Activated CD4-positive, alpha-beta T cell treated with anti-CD3 and anti-CD28 coated beads for 36 hours (primary cell): ENCODE measurements at regions of chr6 and their contacts with region 1.

Region 1: GRCh38 chr6:158270389-158271127 is 41.7 kb upstream of the TULP4 start:
- DNase-seq: peak; percentile 45
- ATAC-seq: no peak
- H3K4me3 Mint-ChIP-seq: peak overlapping the region; percentile 15
- H3K27ac Mint-ChIP-seq: no peak overlapping the region
- H3K4me1 Mint-ChIP-seq: peaks cover 29% of the 10 kb centered on the region
- H3K27me3 Mint-ChIP-seq: no peaks in the 10 kb centered on the region

Region 2: DNA sequence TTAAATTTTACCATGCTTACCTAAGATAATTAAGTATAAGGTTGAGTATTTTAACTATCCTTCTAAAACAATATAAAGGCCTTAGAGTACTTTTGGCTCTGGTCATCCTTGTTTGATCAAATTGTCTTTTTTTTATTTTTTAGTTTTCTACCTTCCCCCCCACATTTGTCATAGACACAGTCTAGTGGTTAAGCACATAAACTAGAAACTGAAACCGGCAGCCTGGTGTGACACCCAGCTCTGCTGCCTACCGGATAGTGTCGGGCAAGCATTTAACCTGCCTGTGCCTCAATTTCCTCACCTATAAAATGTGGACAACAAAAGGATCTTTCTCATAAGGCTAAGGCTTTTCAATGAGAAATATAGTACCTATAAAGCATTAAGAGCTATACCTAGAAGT is 20.1 kb after region 1 on chr6:
- CTCF ChIA-PET with region 1: interaction called, 4 read pairs
- POLR2A ChIA-PET with region 1: no interaction called
- intact Hi-C with region 1: loop called (anchors 1 to 2 kb)
- DNase-seq: peak; percentile 80
- ATAC-seq: peak; percentile 100
- H3K4me3 Mint-ChIP-seq: peak overlapping the region; percentile 58
- H3K27ac Mint-ChIP-seq: peak overlapping the region; percentile 87
- H3K4me1 Mint-ChIP-seq: peaks cover 37% of the 10 kb centered on the region
- H3K27me3 Mint-ChIP-seq: no peaks in the 10 kb centered on the region